GM23248 (cell line): ENCODE measurements at regions of chr14 and their contacts with region 1.

Region 1: DNA sequence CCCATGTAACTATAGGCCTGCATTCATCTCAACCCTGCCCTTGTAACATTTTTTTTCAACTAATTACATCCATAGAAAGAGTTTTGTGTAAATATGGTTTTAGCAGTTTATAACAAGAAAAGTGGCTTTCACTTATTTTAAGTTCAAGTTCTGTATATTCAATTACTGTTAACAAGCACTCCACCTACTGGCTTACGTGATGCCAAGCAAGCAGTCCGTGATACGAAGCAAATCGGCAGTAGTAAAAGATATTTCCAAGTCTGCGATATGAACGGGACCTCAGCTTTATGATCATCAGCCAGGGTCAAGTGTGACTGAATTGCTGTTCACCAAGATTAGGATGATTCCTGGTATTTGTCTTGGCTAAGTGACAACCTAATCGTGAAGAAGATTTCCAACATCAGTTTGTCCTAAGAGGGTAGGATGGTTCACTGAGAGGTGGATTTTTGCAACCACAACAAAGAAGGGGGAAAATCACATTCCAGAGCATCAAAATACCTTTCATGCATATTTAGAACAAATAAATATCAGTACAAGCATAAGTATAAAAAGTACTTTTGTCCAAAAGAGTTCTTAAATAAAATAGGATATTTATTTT is 456.2 kb downstream of the FOXG1 start:
- DNase-seq: peak; percentile 79
- H3K4me3 ChIP-seq: peak overlapping the region; percentile 61
- H3K27ac ChIP-seq: no peak overlapping the region
- H3K4me1 ChIP-seq: peaks cover 9% of the 10 kb centered on the region; the same call in 1 of the 2 replicates
- H3K27me3 ChIP-seq: no peaks in the 10 kb centered on the region

Region 2: DNA sequence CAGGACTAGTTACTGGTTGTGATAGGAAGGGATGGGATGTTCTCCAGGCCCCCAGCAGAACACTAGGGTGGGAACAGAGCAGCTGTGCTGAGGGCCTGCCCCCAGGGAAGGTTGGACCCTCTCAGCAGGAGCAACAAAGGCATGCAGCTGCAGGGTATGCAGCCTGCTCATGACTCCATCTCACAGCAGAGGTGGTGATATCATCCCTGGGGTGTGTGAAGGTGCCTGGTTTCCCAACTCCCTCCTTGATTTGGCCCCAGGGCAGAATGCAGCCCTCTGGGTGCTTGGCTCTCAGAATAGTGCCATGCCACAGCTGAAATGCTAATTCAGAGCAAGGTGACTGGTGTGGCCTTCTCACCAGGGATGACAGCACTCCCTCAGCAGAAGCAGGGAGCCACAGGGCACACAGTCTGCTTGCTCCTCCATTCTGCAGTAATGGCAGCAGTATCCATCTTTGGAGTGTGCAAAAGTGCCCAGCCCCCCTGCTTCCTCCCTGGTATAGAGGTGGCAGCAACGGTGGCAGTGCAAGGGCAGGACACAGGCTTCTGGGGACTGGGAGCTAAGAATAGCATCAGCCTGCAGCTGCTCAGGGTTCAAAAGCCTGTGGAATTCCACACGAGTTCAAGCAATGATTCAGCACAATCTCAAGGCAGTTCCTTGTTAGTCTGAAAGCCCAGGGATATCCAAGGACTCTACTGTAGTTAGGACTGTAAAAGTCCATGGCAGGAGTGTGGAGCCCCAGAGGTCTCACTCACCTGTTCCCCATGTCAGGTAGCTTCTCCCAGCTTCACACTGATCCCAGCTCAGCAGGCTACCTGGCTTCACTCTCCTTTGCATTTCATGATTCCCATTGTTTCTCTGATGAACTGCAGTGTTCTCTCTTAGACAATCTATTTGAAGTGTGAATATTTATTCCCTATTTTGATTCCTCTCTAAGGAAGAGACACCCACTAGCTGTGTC is 754.3 kb before region 1 on chr14:
- in situ Hi-C with region 1: no loop called
- DNase-seq: no peak
- H3K4me3 ChIP-seq: no peak overlapping the region
- H3K27ac ChIP-seq: no peak overlapping the region
- H3K4me1 ChIP-seq: no peaks in the 10 kb centered on the region
- H3K27me3 ChIP-seq: no peaks in the 10 kb centered on the region

Region 3: GRCh38 chr14:29028973-29029582 is 193.7 kb before region 1 on chr14:
- in situ Hi-C with region 1: loop called (anchors 10 kb)
- DNase-seq: no peak
- H3K4me3 ChIP-seq: no peak overlapping the region
- H3K27ac ChIP-seq: no peak overlapping the region
- H3K4me1 ChIP-seq: no peaks in the 10 kb centered on the region
- H3K27me3 ChIP-seq: no peaks in the 10 kb centered on the region